ENCODE measurements at regions of chr4 and their contacts with region 1.

Region 1: GRCh38 chr4:107183155-107183774 is 147.2 kb upstream of the DKK2 start:
- DNase-seq: no peak
- H3K4me3 ChIP-seq: no peak overlapping the region
- CTCF ChIP-seq: peak; percentile 70

Region 2: GRCh38 chr4:106854569-106855351 is 328.5 kb before region 1 on chr4:
- CTCF ChIA-PET with region 1: no interaction called
- POLR2A ChIA-PET with region 1: no interaction called
- DNase-seq: peak; percentile 10
- H3K4me3 ChIP-seq: no peak overlapping the region
- CTCF ChIP-seq: no peak

Region 3: DNA sequence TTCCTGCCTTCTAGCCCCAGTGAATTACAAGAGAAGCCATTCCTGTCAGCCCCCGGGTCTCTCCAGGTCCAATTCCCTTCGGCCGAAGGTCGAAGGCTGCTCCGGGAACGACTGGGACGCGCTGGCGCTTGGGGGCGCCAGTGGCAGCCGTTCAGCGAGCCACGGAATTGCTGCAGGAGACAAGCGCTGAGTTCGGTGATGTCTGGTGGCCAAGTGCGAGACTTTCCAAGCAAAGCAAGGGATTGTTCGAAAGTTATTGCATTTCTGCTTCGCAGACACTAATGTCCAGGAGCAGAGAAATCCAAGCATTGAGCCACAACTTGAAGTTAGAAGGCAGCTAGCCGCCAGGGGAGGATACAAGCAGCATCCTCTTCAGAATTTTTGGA is 146.1 kb before region 1 on chr4:
- CTCF ChIA-PET with region 1: interaction called, 21 read pairs
- POLR2A ChIA-PET with region 1: no interaction called
- DNase-seq: no peak
- H3K4me3 ChIP-seq: peak overlapping the region; percentile 60
- CTCF ChIP-seq: peak; percentile 58

Region 4: GRCh38 chr4:107050525-107051135 is 132.6 kb before region 1 on chr4:
- CTCF ChIA-PET with region 1: interaction called, 19 read pairs
- POLR2A ChIA-PET with region 1: no interaction called
- DNase-seq: no peak
- H3K4me3 ChIP-seq: no peak overlapping the region
- CTCF ChIP-seq: peak; percentile 53

Region 5: GRCh38 chr4:107094332-107094731 is 88.9 kb before region 1 on chr4:
- CTCF ChIA-PET with region 1: interaction called, 36 read pairs
- POLR2A ChIA-PET with region 1: no interaction called
- DNase-seq: no peak
- H3K4me3 ChIP-seq: no peak overlapping the region
- CTCF ChIP-seq: peak; percentile 49

Region 6: DNA sequence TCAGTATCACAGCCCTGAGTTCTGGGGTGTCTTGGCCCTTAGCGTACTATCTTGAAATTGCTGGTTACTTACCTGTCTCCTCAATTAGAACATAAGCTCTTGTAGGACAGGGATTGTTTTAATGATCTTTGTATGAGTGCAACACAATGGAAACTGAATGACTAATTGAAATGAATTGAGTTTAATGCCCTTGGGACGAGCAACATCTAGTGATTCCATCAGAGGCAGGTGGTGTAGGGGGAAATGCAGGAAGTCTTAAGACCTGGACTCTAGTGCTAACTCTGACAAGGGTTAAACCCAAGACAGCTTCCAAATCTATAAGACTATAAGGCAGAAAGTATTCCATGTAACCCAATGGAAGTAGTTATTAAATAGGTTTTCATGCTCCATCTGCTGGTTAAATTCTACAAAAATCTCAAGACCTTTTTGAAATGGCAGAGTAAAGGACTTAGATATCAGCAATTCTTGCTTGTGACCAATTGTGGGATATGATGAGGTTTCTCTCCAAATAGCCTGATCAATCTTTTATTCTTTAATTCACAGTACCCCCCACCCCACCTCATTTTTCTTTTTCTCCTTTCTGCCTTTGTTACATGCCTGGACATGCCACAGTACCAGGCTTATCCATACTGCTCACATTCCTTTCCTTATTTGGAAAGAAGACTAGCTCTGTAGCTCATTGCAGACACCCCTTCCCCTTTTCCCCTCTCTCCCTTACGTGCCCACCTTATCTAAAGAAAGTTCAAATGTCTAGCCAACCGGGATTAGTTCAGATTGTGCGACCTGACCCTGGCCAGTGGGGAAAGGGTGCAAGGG is 196.0 kb after region 1 on chr4:
- CTCF ChIA-PET with region 1: interaction called, 10 read pairs
- POLR2A ChIA-PET with region 1: no interaction called
- DNase-seq: peak; percentile 12
- H3K4me3 ChIP-seq: no peak overlapping the region
- CTCF ChIP-seq: peak; percentile 7

Measured in AG04449 (cell line).